Caco-2 (cell line): ENCODE measurements at regions of chr17 and their contacts with region 1.

Region 1: DNA sequence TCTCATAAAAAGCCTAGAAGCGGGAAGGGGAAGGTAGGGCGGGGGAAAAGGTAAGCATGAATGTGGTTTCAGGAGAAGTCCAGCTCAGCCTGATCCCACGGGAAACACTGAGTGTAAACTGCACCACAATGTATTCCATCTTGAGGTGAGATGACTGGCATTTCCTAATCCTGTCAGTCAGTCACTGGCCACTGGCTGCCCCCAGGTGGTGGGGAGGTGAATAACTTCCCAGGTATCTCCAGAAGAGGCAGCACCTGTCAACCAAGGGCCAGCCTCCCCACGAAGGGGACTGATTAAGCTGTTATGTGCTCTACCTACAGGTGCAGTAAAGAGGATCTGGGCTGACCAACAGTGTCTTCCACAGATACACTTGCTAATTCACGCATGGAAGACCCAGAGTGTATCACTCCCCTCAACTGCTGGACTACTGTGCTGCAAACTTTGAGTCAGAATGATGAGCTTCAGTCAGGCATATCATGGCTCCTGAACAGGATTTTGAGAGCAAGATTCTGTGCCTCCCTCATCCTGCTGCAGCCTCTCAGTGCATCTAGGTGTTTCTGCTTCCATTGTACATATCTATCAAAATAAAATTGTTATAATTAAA is 108.5 kb upstream of the CCL2 start:
- DNase-seq: peak; percentile 81 to 86
- H3K4me3 ChIP-seq: no peak overlapping the region
- H3K4me3 Mint-ChIP-seq: no peak overlapping the region
- H3K27ac Mint-ChIP-seq: no peak overlapping the region
- H3K4me1 ChIP-seq: no peaks in the 10 kb centered on the region
- H3K4me1 Mint-ChIP-seq: no peaks in the 10 kb centered on the region
- H3K27me3 ChIP-seq: no peaks in the 10 kb centered on the region
- H3K27me3 Mint-ChIP-seq: peaks cover 8% of the 10 kb centered on the region
- CTCF ChIP-seq: peak; percentile 76 to 96

Region 2: GRCh38 chr17:33779225-33779591 is 367.3 kb before region 1 on chr17:
- CTCF ChIA-PET with region 1: no interaction called
- POLR2A ChIA-PET with region 1: no interaction called
- intact Hi-C with region 1: loop called (anchors 1 kb)
- DNase-seq: peak; percentile 53 to 55
- H3K4me3 ChIP-seq: no peak overlapping the region
- H3K4me3 Mint-ChIP-seq: no peak overlapping the region
- H3K27ac Mint-ChIP-seq: no peak overlapping the region
- H3K4me1 ChIP-seq: no peaks in the 10 kb centered on the region
- H3K4me1 Mint-ChIP-seq: no peaks in the 10 kb centered on the region
- H3K27me3 ChIP-seq: no peaks in the 10 kb centered on the region; the same call in none of the 2 replicates
- H3K27me3 Mint-ChIP-seq: peaks cover 18% of the 10 kb centered on the region
- CTCF ChIP-seq: peak; percentile 90 to 95

Region 3: GRCh38 chr17:33964344-33964979 is 182.1 kb before region 1 on chr17:
- CTCF ChIA-PET with region 1: no interaction called
- POLR2A ChIA-PET with region 1: no interaction called
- intact Hi-C with region 1: loop called (anchors 10 kb)
- DNase-seq: peak in 1 of 2 experiments; percentile 16
- H3K4me3 ChIP-seq: no peak overlapping the region
- H3K4me3 Mint-ChIP-seq: no peak overlapping the region
- H3K27ac Mint-ChIP-seq: no peak overlapping the region
- H3K4me1 ChIP-seq: no peaks in the 10 kb centered on the region
- H3K4me1 Mint-ChIP-seq: no peaks in the 10 kb centered on the region
- H3K27me3 ChIP-seq: no peaks in the 10 kb centered on the region
- H3K27me3 Mint-ChIP-seq: peaks cover 21% of the 10 kb centered on the region
- CTCF ChIP-seq: peak in 1 of 2 experiments; percentile 25

Region 4: DNA sequence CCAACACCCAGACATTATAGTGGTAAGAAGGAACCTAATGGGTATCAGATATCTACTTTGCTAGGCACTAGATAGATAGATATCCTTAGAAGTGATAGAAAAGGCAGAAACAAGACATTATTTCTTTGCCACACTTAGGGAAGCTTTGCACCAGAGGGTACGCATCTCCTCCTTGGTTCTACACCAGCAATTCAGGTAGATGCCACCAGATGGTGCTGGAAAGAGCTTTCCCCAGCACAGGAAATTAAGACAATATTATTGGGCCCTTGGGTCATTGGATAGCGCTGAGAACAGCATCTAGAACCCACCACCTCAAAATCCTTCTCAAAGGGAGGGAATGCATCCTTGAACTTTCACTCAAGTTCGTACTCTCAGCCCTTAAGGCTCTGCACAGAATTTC is 65.3 kb before region 1 on chr17:
- CTCF ChIA-PET with region 1: interaction called, 6 read pairs
- POLR2A ChIA-PET with region 1: no interaction called
- intact Hi-C with region 1: loop called (anchors 1 kb)
- DNase-seq: peak in 1 of 2 experiments; percentile 30
- H3K4me3 ChIP-seq: no peak overlapping the region
- H3K4me3 Mint-ChIP-seq: no peak overlapping the region
- H3K27ac Mint-ChIP-seq: no peak overlapping the region
- H3K4me1 ChIP-seq: no peaks in the 10 kb centered on the region
- H3K4me1 Mint-ChIP-seq: no peaks in the 10 kb centered on the region
- H3K27me3 ChIP-seq: no peaks in the 10 kb centered on the region; the same call in 1 of the 2 replicates
- H3K27me3 Mint-ChIP-seq: peaks cover 17% of the 10 kb centered on the region
- CTCF ChIP-seq: peak; percentile 48 to 58